ENCODE measurements at regions of chr18 and their contacts with region 1.

Region 1: GRCh38 chr18:63161761-63162195 is 157.8 kb downstream of the BCL2 start:
- DNase-seq: peak; percentile 80
- ATAC-seq: peak; percentile 56
- H3K4me3 ChIP-seq: peak overlapping the region in 1 of 5 experiments; percentile 43
- H3K4me3 Mint-ChIP-seq: peak overlapping the region; percentile 79
- H3K27ac ChIP-seq: peak overlapping the region; percentile 89 to 97
- H3K27ac Mint-ChIP-seq: peak overlapping the region; percentile 96
- H3K4me1 ChIP-seq: peaks cover 77 to 79% of the 10 kb centered on the region in 2 donors
- H3K4me1 Mint-ChIP-seq: peaks cover 88% of the 10 kb centered on the region
- H3K27me3 ChIP-seq: no peaks in the 10 kb centered on the region
- H3K27me3 Mint-ChIP-seq: no peaks in the 10 kb centered on the region
- CTCF ChIP-seq: no peak

Region 2: GRCh38 chr18:63138436-63139340 is 23.1 kb before region 1 on chr18:
- CTCF ChIA-PET with region 1: interaction called, 160 read pairs
- POLR2A ChIA-PET with region 1: interaction called, 10 read pairs
- intact Hi-C with region 1: loop called (anchors 1 kb)
- DNase-seq: peak; percentile 80
- ATAC-seq: peak; percentile 57
- H3K4me3 ChIP-seq: peak overlapping the region; percentile 27 to 67 (median 56)
- H3K4me3 Mint-ChIP-seq: peak overlapping the region; percentile 95
- H3K27ac ChIP-seq: peak overlapping the region; percentile 73 to 84
- H3K27ac Mint-ChIP-seq: peak overlapping the region; percentile 98
- H3K4me1 ChIP-seq: peaks cover 63 to 67% of the 10 kb centered on the region in 2 donors
- H3K4me1 Mint-ChIP-seq: peaks cover 84% of the 10 kb centered on the region
- H3K27me3 ChIP-seq: no peaks in the 10 kb centered on the region
- H3K27me3 Mint-ChIP-seq: no peaks in the 10 kb centered on the region
- CTCF ChIP-seq: no peak

Region 3: GRCh38 chr18:63207143-63207790 is 45.5 kb after region 1 on chr18:
- CTCF ChIA-PET with region 1: interaction called, 3 read pairs
- POLR2A ChIA-PET with region 1: interaction called, 3 read pairs
- intact Hi-C with region 1: loop called (anchors 2 kb)
- DNase-seq: peak; percentile 44
- ATAC-seq: peak; percentile 55
- H3K4me3 ChIP-seq: peak overlapping the region in 2 of 5 experiments; percentile 15 to 31
- H3K4me3 Mint-ChIP-seq: peak overlapping the region; percentile 75
- H3K27ac ChIP-seq: peak overlapping the region; percentile 26 to 52
- H3K27ac Mint-ChIP-seq: peak overlapping the region; percentile 79
- H3K4me1 ChIP-seq: peaks cover 57 to 58% of the 10 kb centered on the region in 2 donors
- H3K4me1 Mint-ChIP-seq: peaks cover 80% of the 10 kb centered on the region
- H3K27me3 ChIP-seq: no peaks in the 10 kb centered on the region
- H3K27me3 Mint-ChIP-seq: no peaks in the 10 kb centered on the region
- CTCF ChIP-seq: no peak

Region 4: GRCh38 chr18:63284827-63285733 is 123.3 kb after region 1 on chr18:
- CTCF ChIA-PET with region 1: interaction called, 11 read pairs
- POLR2A ChIA-PET with region 1: interaction called, 3 read pairs
- intact Hi-C with region 1: no loop called
- DNase-seq: peak; percentile 82
- ATAC-seq: peak; percentile 95
- H3K4me3 ChIP-seq: peak overlapping the region in 4 of 5 experiments; percentile 15 to 51 (median 32)
- H3K4me3 Mint-ChIP-seq: no peak overlapping the region
- H3K27ac ChIP-seq: peak overlapping the region; percentile 93 to 95
- H3K27ac Mint-ChIP-seq: no peak overlapping the region
- H3K4me1 ChIP-seq: peaks cover 69 to 73% of the 10 kb centered on the region in 2 donors
- H3K4me1 Mint-ChIP-seq: peaks cover 24% of the 10 kb centered on the region
- H3K27me3 ChIP-seq: no peaks in the 10 kb centered on the region
- H3K27me3 Mint-ChIP-seq: no peaks in the 10 kb centered on the region
- CTCF ChIP-seq: no peak

Region 5: DNA sequence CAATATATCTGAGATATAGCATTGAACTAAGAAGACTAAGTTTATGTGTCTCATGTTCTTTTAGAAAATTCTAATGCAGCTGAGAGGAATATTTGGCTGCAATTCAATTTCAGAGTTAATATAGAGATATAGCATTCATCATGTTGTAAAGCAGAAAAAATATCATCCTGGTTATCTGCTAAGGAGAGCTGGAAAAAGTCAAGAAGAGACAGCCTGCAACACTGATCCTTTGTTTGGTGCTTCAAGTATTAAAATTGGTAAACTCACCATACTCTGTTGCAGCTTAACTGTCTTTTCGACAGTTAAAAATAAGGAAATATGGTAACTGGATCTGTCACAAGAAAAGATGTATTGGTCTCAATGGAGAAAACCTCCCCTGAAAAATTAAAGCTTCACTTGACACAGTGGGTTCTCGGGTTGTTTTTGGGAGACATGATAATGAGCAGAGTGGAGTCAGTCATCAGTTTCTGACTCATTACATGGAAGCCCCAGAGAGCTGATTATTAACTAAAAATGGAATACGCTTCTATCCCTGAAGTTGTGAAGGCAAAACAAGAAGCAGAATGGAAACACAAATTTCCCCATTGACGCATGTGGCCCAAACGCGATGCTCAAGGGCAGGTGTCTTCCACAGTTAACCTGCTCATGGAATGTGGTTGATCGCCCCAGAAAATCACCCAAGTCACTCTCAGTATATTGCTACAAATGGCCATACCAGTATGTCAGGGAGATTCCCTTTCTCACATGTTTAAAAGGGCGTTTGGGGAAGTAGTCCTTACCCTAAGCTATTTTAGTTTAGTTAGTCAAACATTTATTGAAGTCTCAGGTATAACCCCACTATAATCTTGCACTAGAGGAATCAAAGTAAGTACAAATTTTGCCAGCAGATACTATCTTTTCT is 149.6 kb after region 1 on chr18:
- CTCF ChIA-PET with region 1: interaction called, 13 read pairs
- POLR2A ChIA-PET with region 1: interaction called, 6 read pairs
- intact Hi-C with region 1: no loop called
- DNase-seq: peak; percentile 84
- ATAC-seq: peak; percentile 74
- H3K4me3 ChIP-seq: peak overlapping the region in 4 of 5 experiments; percentile 4 to 98 (median 30)
- H3K4me3 Mint-ChIP-seq: peak overlapping the region; percentile 81
- H3K27ac ChIP-seq: peak overlapping the region; percentile 68 to 92
- H3K27ac Mint-ChIP-seq: peak overlapping the region; percentile 92
- H3K4me1 ChIP-seq: peaks cover 77 to 85% of the 10 kb centered on the region in 2 donors
- H3K4me1 Mint-ChIP-seq: peaks cover 92% of the 10 kb centered on the region
- H3K27me3 ChIP-seq: no peaks in the 10 kb centered on the region
- H3K27me3 Mint-ChIP-seq: no peaks in the 10 kb centered on the region
- CTCF ChIP-seq: no peak